CD4-positive, alpha-beta memory T cell (primary cell): ENCODE measurements at regions of chr22 and their contacts with region 1.

Region 1: GRCh38 chr22:26672590-26673468 is 15.4 kb downstream of the MIAT start:
- DNase-seq: peak; percentile 91 to 94 (median 92)
- H3K4me3 ChIP-seq: peak overlapping the region; percentile 79
- H3K4me3 Mint-ChIP-seq: peak overlapping the region; percentile 85 to 99 (median 98)
- H3K27ac ChIP-seq: peak overlapping the region; percentile 94
- H3K27ac Mint-ChIP-seq: peak overlapping the region; percentile 95 to 99 (median 98)
- H3K4me1 ChIP-seq: peaks cover 81% of the 10 kb centered on the region
- H3K4me1 Mint-ChIP-seq: peaks cover 61 to 92% (median 75%) of the 10 kb centered on the region in 4 donors
- H3K27me3 ChIP-seq: no peaks in the 10 kb centered on the region
- H3K27me3 Mint-ChIP-seq: no peaks in the 10 kb centered on the region

Region 2: DNA sequence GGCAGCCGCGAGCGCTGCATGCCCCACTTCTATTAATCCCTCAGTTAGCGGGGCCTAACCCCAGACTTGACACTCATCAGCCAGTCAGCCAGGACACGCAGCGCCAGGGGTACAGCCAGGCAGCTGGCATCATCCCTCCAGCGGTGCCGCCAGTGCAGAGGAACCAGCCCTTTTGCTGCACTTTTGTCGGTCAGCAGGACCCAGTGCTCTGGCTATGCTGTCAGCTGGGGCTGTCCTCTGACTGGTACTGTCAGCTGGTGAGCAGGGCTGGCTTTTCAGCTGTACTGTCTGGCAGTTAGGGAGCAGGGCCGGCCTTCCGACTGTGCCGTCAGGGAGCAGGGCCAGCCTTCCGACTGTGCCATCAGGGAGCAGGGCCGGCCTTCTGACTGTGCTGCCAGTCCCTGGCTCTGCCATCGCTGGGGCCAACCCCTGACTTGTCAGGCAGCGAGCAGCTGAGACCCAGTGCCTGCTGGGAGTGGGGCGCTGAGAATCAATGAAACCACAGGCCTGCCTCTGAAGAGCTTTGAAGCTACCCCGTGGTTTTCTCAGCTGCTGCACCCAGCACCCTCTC is 1604.9 kb before region 1 on chr22:
- CTCF ChIA-PET with region 1: no interaction called
- POLR2A ChIA-PET with region 1: no interaction called
- intact Hi-C with region 1: loop called (anchors 10 kb)
- DNase-seq: peak; percentile 91 to 95 (median 93)
- H3K4me3 ChIP-seq: no peak overlapping the region
- H3K4me3 Mint-ChIP-seq: peak overlapping the region; percentile 84 to 95 (median 90)
- H3K27ac ChIP-seq: peak overlapping the region; percentile 77
- H3K27ac Mint-ChIP-seq: peak overlapping the region; percentile 95 to 99 (median 97)
- H3K4me1 ChIP-seq: peaks cover 83% of the 10 kb centered on the region
- H3K4me1 Mint-ChIP-seq: peaks cover 57 to 91% (median 77%) of the 10 kb centered on the region in 4 donors
- H3K27me3 ChIP-seq: no peaks in the 10 kb centered on the region
- H3K27me3 Mint-ChIP-seq: no peaks in the 10 kb centered on the region

Region 3: GRCh38 chr22:26428515-26429457 is 244.0 kb before region 1 on chr22 and contains the start of gene ASPHD2:
- CTCF ChIA-PET with region 1: interaction called, 5 read pairs
- POLR2A ChIA-PET with region 1: interaction called, 19 read pairs
- intact Hi-C with region 1: loop called (anchors 1 kb)
- DNase-seq: peak; percentile 81 to 86 (median 83)
- H3K4me3 ChIP-seq: peak within 1 kb of the TSS; percentile 64 to 87
- H3K4me3 Mint-ChIP-seq: peak within 1 kb of the TSS; percentile 94 to 100 (median 98)
- H3K27ac ChIP-seq: peak within 1 kb of the TSS; percentile 89
- H3K27ac Mint-ChIP-seq: peak within 1 kb of the TSS; percentile 87 to 100 (median 99)
- H3K4me1 ChIP-seq: peaks cover 25% of the 10 kb centered on the region
- H3K4me1 Mint-ChIP-seq: peaks cover 18 to 37% (median 26%) of the 10 kb centered on the region in 4 donors
- H3K27me3 ChIP-seq: no peaks in the 10 kb centered on the region
- H3K27me3 Mint-ChIP-seq: peaks cover 0 to 2% of the 10 kb centered on the region in 2 donors
- total RNA-seq, gene ASPHD2: 4.0 to 4.1 TPM

Region 4: GRCh38 chr22:26502688-26503561 is 169.9 kb before region 1 on chr22:
- CTCF ChIA-PET with region 1: interaction called, 32 read pairs
- POLR2A ChIA-PET with region 1: interaction called, 8 read pairs
- intact Hi-C with region 1: no loop called
- DNase-seq: peak; percentile 57 to 69 (median 65)
- H3K4me3 ChIP-seq: no peak overlapping the region
- H3K4me3 Mint-ChIP-seq: peak overlapping the region in 7 of 8 donors; percentile 13 to 76 (median 49)
- H3K27ac ChIP-seq: no peak overlapping the region
- H3K27ac Mint-ChIP-seq: peak overlapping the region; percentile 57 to 93 (median 79)
- H3K4me1 ChIP-seq: peaks cover 22% of the 10 kb centered on the region
- H3K4me1 Mint-ChIP-seq: peaks cover 17 to 27% (median 23%) of the 10 kb centered on the region in 4 donors
- H3K27me3 ChIP-seq: no peaks in the 10 kb centered on the region
- H3K27me3 Mint-ChIP-seq: no peaks in the 10 kb centered on the region

Region 5: DNA sequence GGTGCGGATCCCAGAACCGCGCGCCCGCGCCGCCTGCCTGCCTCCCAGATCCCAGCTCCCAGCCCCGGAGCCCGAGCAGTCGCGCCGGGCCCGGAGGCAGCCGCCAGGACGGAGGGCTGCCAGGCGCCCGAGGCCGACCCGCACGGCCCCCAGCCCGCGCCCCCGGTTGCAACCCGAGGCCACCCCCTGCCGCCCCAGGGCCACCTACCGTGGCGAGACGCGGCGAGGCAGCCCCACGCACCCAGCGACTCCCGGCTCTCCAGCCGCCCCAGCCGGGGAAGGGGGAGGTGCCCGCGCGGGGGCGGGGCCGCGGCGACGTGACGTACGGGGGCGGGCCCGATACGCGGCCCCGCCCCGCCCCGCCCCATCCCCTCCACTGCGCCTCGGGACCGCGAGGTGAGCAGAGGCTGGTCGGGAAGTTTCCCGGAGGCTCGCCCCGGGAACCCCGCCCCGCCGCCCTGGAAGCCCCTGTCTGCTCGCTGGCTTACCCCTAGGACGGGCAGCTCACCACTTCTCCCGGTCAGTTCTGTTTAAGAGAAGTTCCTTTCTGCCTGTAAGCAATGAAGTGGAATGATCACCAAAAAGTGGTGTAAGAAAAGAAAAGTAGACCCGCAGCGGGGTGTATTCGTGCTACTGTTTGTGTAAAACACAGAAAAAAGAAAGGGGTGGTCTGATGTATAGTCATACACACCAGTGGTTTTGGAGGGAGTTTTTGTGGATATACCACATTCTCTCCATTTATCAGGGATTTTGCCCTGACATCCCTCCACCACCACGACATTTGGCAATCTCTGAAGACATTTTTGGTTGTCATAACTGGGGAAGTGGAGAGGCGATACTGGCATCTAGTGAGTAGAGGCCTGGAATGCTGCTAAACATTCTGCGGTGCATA is 82.7 kb before region 1 on chr22 and contains the start of gene TPST2:
- CTCF ChIA-PET with region 1: interaction called, 3 read pairs
- POLR2A ChIA-PET with region 1: interaction called, 20 read pairs
- intact Hi-C with region 1: loop called (anchors 1 kb)
- DNase-seq: peak; percentile 73 to 82 (median 76)
- H3K4me3 ChIP-seq: peak within 1 kb of the TSS; percentile 78 to 95
- H3K4me3 Mint-ChIP-seq: peak within 1 kb of the TSS; percentile 90 to 98 (median 94)
- H3K27ac ChIP-seq: peak within 1 kb of the TSS; percentile 66
- H3K27ac Mint-ChIP-seq: peak within 1 kb of the TSS; percentile 91 to 98 (median 96)
- H3K4me1 ChIP-seq: peaks cover 81% of the 10 kb centered on the region
- H3K4me1 Mint-ChIP-seq: peaks cover 41 to 85% (median 61%) of the 10 kb centered on the region in 4 donors
- H3K27me3 ChIP-seq: no peaks in the 10 kb centered on the region
- H3K27me3 Mint-ChIP-seq: no peaks in the 10 kb centered on the region
- total RNA-seq, gene TPST2: 23.9 to 27.9 TPM

Region 6: GRCh38 chr22:26658671-26659478 is 14.0 kb before region 1 on chr22:
- CTCF ChIA-PET with region 1: interaction called, 7 read pairs
- POLR2A ChIA-PET with region 1: interaction called, 95 read pairs
- intact Hi-C with region 1: loop called (anchors 1 kb)
- DNase-seq: peak; percentile 48 to 91 (median 61)
- H3K4me3 ChIP-seq: peak overlapping the region; percentile 90 to 95
- H3K4me3 Mint-ChIP-seq: peak overlapping the region; percentile 91 to 97 (median 94)
- H3K27ac ChIP-seq: peak overlapping the region; percentile 58
- H3K27ac Mint-ChIP-seq: peak overlapping the region; percentile 86 to 95 (median 90)
- H3K4me1 ChIP-seq: peaks cover 29% of the 10 kb centered on the region
- H3K4me1 Mint-ChIP-seq: peaks cover 19 to 42% (median 25%) of the 10 kb centered on the region in 4 donors
- H3K27me3 ChIP-seq: no peaks in the 10 kb centered on the region
- H3K27me3 Mint-ChIP-seq: no peaks in the 10 kb centered on the region

Region 7: GRCh38 chr22:26689513-26690301 is 16.9 kb after region 1 on chr22:
- CTCF ChIA-PET with region 1: interaction called, 24 read pairs
- POLR2A ChIA-PET with region 1: interaction called, 27 read pairs
- intact Hi-C with region 1: no loop called
- DNase-seq: no peak
- H3K4me3 ChIP-seq: no peak overlapping the region
- H3K4me3 Mint-ChIP-seq: no peak overlapping the region
- H3K27ac ChIP-seq: no peak overlapping the region
- H3K27ac Mint-ChIP-seq: peak overlapping the region in 5 of 7 donors; percentile 18 to 81 (median 58)
- H3K4me1 ChIP-seq: peaks cover 49% of the 10 kb centered on the region
- H3K4me1 Mint-ChIP-seq: peaks cover 44 to 79% (median 66%) of the 10 kb centered on the region in 4 donors
- H3K27me3 ChIP-seq: no peaks in the 10 kb centered on the region
- H3K27me3 Mint-ChIP-seq: no peaks in the 10 kb centered on the region